Activated CD4-positive, alpha-beta memory T cell treated with anti-CD3 and anti-CD28 coated beads for 36 hours (primary cell): ENCODE measurements at regions of chr11 and their contacts with region 1.

Region 1: GRCh38 chr11:66069715-66070603 is at the start of gene PACS1:
- DNase-seq: peak; percentile 85
- H3K4me3 Mint-ChIP-seq: peak within 1 kb of the TSS; percentile 97
- H3K27ac Mint-ChIP-seq: peak within 1 kb of the TSS; percentile 96
- H3K4me1 Mint-ChIP-seq: peaks cover 62% of the 10 kb centered on the region
- H3K27me3 Mint-ChIP-seq: no peaks in the 10 kb centered on the region
- total RNA-seq, gene PACS1: 82.0 to 84.1 TPM

Region 2: DNA sequence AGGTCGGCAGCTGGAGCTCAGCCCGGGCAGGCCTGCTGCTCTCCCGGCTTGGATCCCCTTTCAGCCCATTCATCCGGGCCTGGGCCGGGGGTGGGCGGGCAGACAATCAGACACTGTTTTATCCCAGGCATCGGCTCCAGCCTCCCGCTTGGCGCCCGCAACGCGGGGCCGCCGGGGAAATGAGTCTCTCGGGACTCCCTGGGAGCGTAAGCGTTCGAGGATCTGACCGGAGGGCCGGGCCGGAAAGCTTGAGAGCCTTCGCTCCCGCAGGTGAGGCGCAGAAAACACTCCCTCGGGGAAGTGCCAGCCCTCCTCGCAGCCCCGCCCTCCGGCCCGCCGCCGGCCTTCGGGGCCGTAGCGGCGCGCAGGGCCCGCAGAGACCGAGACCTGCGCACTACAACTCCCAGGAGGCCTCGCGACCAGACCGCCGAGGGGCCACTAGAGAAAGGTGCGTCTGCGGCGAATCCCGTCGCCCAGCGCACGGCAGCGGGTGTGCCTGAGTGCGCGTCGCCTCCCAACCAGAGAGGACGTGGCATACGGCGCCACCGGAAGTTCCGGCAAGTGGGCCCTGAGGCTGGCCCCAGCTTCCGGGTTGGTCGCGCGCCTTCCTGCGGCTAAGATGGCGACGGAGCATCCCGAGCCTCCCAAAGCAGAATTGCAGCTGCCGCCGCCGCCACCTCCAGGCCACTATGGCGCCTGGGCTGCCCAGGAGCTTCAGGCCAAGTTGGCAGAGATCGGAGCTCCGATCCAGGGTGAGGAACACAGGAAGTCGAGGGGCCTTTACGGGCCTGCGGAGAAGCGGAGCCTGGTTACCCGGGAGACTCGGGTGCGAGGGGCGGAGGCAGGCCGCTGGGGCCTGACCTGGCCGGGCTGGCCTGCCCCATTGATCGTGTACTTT is 17.9 kb before region 1 on chr11 and contains the start of gene SF3B2:
- CTCF ChIA-PET with region 1: interaction called, 77 read pairs
- POLR2A ChIA-PET with region 1: interaction called, 32 read pairs
- intact Hi-C with region 1: loop called (anchors 1 kb)
- DNase-seq: peak; percentile 99
- H3K4me3 Mint-ChIP-seq: peak within 1 kb of the TSS; percentile 100
- H3K27ac Mint-ChIP-seq: peak within 1 kb of the TSS; percentile 97
- H3K4me1 Mint-ChIP-seq: peaks cover 41% of the 10 kb centered on the region
- H3K27me3 Mint-ChIP-seq: peaks cover 5% of the 10 kb centered on the region
- total RNA-seq, gene SF3B2: 271 to 274 TPM

Region 3: GRCh38 chr11:66100272-66101065 is 30.5 kb after region 1 on chr11:
- CTCF ChIA-PET with region 1: interaction called, 16 read pairs
- POLR2A ChIA-PET with region 1: interaction called, 3 read pairs
- intact Hi-C with region 1: loop called (anchors 5 kb)
- DNase-seq: peak; percentile 77
- H3K4me3 Mint-ChIP-seq: peak overlapping the region; percentile 66
- H3K27ac Mint-ChIP-seq: peak overlapping the region; percentile 90
- H3K4me1 Mint-ChIP-seq: peaks cover 64% of the 10 kb centered on the region
- H3K27me3 Mint-ChIP-seq: no peaks in the 10 kb centered on the region

Region 4: DNA sequence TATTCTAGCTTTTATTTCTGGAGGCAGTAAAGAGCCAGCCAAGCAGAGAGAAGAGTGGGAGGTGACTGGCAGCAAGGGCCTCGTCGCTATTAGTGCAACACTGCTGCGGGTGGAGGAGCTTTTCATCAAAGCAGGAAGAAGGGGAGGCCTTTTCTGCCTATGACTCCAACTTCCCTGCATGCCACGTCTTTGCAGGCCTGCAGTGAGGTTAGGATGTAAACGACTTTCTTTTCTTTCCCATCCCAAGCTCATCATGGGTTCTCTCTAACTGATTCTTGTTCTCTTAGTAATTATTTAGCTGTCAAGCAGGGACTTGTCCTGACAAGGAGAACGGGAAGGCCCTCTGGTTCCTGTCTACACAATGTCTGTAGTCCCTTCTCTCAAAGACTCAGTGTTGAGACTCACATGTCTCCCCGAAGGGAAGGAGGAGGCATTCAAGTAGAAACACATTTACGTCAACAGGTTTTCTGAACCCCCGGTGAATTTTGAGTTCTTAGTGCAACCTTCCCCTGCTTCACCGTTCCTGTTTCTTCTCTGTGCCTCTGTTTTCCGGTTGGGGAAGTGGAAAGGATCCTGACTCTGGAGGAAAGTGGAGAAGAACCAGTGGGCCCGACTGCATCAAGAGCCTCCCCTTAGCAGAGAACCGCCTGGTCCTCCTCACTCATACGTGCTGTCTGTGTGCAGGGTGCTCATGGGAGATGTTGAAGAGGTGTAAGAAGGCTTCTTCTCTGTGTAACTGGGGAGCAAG is 57.0 kb after region 1 on chr11:
- CTCF ChIA-PET with region 1: interaction called, 11 read pairs
- POLR2A ChIA-PET with region 1: interaction called, 4 read pairs
- intact Hi-C with region 1: loop called (anchors 2 kb)
- DNase-seq: peak; percentile 80
- H3K4me3 Mint-ChIP-seq: peak overlapping the region; percentile 68
- H3K27ac Mint-ChIP-seq: peak overlapping the region; percentile 89
- H3K4me1 Mint-ChIP-seq: peaks cover 73% of the 10 kb centered on the region
- H3K27me3 Mint-ChIP-seq: no peaks in the 10 kb centered on the region